Caco-2 (cell line): ENCODE measurements at regions of chr2 and their contacts with region 1.

Region 1: GRCh38 chr2:130391058-130391871 is 35.4 kb downstream of the PTPN18 start:
- DNase-seq: peak; percentile 84 to 88
- H3K4me3 ChIP-seq: peak overlapping the region; percentile 91
- H3K4me3 Mint-ChIP-seq: peak overlapping the region; percentile 72
- H3K27ac Mint-ChIP-seq: peak overlapping the region; percentile 74
- H3K4me1 ChIP-seq: peaks cover 21% of the 10 kb centered on the region
- H3K4me1 Mint-ChIP-seq: peaks cover 15% of the 10 kb centered on the region
- H3K27me3 ChIP-seq: no peaks in the 10 kb centered on the region
- H3K27me3 Mint-ChIP-seq: no peaks in the 10 kb centered on the region
- CTCF ChIP-seq: no peak

Region 2: DNA sequence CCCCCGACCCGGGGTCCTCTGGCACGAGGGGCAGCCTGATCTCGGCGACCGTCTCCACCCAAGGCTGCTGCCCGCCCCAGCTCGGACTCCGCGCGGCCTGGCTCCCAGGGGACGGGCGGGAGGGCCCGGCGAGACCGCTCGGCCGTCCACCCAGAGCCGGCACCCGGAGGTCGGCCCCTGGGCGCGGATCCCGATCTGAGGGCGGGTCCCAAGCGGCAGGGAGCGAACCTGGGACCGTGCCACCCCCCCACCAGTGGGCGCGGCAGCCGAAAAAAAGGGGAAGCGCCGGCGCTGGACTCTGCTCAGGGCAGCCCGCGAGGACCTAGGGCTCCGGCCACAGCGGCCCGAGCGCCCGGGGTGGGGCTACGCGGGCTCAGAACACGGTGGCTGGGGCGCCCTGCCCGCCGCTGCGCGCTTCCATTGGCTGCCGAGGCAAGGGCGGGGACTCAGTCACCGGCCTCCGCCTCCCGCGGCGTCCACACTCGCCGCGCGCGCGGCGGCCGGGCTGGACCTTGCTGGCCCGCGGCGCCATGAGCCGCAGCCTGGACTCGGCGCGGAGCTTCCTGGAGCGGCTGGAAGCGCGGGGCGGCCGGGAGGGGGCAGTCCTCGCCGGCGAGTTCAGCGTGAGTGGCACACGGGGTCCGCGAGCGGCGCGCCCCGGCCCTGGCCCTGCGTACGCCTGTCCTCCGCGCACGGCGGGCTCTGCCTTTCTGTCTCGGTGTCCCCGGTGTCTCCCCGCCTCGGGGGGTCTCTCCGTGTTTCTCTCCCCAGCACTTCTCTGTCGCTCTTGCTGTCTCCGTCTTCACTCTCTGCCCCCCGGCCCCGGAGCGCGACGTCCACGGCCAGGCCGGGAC is 35.5 kb before region 1 on chr2 and contains the start of gene PTPN18:
- CTCF ChIA-PET with region 1: interaction called, 4 read pairs
- POLR2A ChIA-PET with region 1: no interaction called
- intact Hi-C with region 1: loop called (anchors 1 kb)
- DNase-seq: peak; percentile 90 to 94
- H3K4me3 ChIP-seq: peak within 1 kb of the TSS; percentile 75
- H3K4me3 Mint-ChIP-seq: peak within 1 kb of the TSS; percentile 90
- H3K27ac Mint-ChIP-seq: peak within 1 kb of the TSS; percentile 86
- H3K4me1 ChIP-seq: peaks cover 5% of the 10 kb centered on the region; the same call in 1 of the 2 replicates
- H3K4me1 Mint-ChIP-seq: peaks cover 10% of the 10 kb centered on the region
- H3K27me3 ChIP-seq: no peaks in the 10 kb centered on the region
- H3K27me3 Mint-ChIP-seq: no peaks in the 10 kb centered on the region
- CTCF ChIP-seq: peak; percentile 47 to 53
- total RNA-seq, gene PTPN18: 46.5 and 51.0 TPM in 2 replicates